Activated CD4-positive, alpha-beta T cell treated with anti-CD3 and anti-CD28 coated beads for 36 hours (primary cell): ENCODE measurements at regions of chr6 and their contacts with region 1.

Region 1: DNA sequence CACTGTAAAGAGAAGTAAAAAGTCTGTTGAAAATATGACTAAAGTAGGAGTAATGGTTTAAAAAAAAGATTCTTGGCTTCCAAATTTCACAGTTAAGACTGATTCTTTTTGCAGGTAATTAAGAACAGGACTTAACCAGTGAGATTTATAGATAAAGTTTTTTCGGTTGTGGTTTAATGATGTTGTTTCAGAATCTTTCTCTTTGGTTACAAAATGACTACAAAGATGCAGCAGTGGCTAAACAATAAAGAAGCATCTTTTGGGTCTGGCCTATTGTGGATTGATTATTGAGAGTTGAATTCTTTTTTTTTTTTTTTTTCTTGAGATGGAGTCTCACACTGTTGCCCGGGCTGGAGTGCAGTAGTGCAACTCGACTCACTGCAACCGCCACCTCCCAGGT is 109.7 kb downstream of the AKAP7 start:
- DNase-seq: no peak
- ATAC-seq: no peak
- H3K4me3 Mint-ChIP-seq: no peak overlapping the region
- H3K27ac Mint-ChIP-seq: no peak overlapping the region
- H3K4me1 Mint-ChIP-seq: peaks cover 24% of the 10 kb centered on the region
- H3K27me3 Mint-ChIP-seq: no peaks in the 10 kb centered on the region

Region 2: DNA sequence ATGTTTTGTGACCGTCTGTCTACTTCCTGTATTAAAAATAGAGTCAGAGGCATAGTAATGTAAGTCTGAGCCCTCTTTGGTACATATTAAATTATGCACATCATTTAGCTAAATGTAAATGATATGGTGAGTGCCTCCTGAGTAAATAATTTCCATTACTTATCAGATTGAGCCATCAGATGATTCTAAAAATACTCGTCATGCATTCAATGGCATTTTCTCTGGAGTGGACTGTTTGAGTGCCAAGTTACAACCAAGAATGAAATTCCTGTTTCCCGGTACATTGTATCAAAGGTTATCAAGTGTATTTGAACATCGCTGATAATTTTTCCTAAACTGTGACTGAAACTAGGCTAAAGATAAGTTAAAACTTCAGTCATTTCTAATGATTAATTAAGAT is 28.7 kb before region 1 on chr6:
- CTCF ChIA-PET with region 1: no interaction called
- POLR2A ChIA-PET with region 1: interaction called, 10 read pairs
- intact Hi-C with region 1: no loop called
- DNase-seq: no peak
- ATAC-seq: no peak
- H3K4me3 Mint-ChIP-seq: no peak overlapping the region
- H3K27ac Mint-ChIP-seq: no peak overlapping the region
- H3K4me1 Mint-ChIP-seq: peaks cover 34% of the 10 kb centered on the region
- H3K27me3 Mint-ChIP-seq: no peaks in the 10 kb centered on the region

Region 3: GRCh38 chr6:131231891-131232290 is 13.1 kb before region 1 on chr6:
- CTCF ChIA-PET with region 1: no interaction called
- POLR2A ChIA-PET with region 1: no interaction called
- intact Hi-C with region 1: no loop called
- DNase-seq: no peak
- ATAC-seq: no peak
- H3K4me3 Mint-ChIP-seq: no peak overlapping the region
- H3K27ac Mint-ChIP-seq: no peak overlapping the region
- H3K4me1 Mint-ChIP-seq: peaks cover 17% of the 10 kb centered on the region
- H3K27me3 Mint-ChIP-seq: no peaks in the 10 kb centered on the region